PC-3 (cell line): ENCODE measurements at regions of chr13 and their contacts with region 1.

Region 1: DNA sequence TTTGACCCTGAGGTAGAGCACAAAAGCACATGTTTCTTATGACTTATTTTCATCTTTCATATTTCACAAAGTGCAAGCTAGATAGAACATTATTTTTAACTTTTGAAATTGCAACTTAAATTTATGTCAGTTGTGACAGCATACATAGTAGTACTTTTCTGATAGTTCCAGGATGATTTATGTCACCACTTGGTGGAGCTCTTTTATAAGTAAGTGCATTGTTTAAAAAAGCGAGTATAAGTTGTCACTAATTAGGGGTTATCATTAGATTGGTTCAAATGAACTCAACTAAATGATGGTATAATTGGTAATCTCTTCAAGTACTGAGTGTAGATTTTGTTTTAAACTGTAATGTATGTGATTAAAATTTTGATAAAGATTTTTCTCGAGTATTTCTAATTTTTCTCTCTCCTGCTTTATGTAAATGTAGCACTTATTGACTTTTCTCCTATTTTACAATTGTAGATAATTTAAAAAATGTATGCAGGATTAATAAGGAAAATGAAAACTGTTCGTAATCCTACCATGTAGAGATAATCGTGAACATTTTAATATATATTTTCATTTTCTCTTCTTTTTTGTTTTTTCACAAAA is 31.1 kb downstream of the RB1 start:
- DNase-seq: peak; percentile 49
- ATAC-seq: peak; percentile 74
- H3K4me3 ChIP-seq: no peak overlapping the region
- H3K27ac ChIP-seq: peak overlapping the region; percentile 53
- H3K4me1 ChIP-seq: peaks cover 18% of the 10 kb centered on the region
- H3K27me3 ChIP-seq: no peaks in the 10 kb centered on the region
- CTCF ChIP-seq: peak; percentile 87

Region 2: DNA sequence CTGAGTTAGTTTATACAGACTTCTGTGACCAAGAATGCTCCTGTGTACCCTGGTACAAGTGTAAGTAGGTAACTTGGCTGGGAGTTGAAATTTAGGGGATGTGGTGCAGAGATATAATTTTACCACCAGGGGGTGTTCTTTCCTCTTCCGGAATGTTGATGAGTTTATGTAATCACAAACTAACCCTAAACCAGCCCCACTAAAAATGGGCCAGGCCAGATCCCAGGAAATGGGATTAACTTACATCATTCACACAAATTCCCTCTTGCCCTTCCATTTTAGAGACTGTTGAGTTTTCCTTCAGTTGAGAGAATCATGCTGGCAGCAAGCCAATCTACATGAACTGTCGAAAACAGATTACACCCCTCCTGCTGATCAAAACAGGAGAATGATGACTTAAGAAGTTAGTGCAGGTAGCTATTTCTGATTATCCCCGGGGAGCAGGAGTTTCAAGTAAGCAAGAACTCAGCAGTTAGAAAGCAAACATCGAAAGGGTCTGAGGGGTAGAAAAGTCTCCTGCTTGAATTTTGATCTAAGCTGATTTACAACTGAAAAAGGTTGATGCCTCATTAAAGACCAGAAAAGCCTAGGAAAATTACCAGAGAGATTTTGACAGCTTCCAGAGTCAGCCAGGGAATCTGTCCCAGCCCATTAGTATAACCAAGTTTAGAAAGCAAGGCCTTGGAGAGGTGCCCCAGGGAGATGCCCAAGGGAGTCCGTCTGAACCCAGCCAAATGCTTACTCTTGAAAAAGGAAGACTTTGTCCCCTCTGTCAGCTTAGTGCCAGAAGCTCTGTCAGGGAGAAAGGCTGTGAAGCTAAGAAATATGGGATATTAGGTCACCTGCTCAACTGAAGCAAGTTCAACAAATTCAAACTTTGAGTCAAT is 207.4 kb before region 1 on chr13:
- CTCF ChIA-PET with region 1: no interaction called
- POLR2A ChIA-PET with region 1: no interaction called
- intact Hi-C with region 1: loop called (anchors 5 kb)
- DNase-seq: peak; percentile 66
- ATAC-seq: peak; percentile 73
- H3K4me3 ChIP-seq: no peak overlapping the region
- H3K27ac ChIP-seq: no peak overlapping the region
- H3K4me1 ChIP-seq: no peaks in the 10 kb centered on the region
- H3K27me3 ChIP-seq: no peaks in the 10 kb centered on the region
- CTCF ChIP-seq: peak; percentile 68

Region 3: DNA sequence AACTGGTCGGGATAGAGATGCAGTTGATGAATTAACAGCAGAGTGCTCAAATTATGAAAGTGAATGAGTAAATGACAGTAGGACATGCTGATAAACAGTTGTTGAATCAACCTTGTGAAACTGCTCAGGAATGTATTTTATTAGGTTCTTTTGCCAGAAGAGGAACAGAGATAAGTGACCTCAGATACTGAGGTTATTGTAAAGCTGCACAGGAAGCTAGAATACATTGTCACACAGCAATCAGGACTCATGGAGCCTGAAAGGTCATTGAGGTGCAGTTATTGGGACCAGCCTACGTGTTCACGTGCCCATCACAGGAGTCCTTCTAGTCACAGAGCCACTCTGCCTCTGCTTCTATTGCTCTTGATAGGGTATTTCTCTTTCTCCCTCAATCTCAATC is 192.2 kb before region 1 on chr13:
- CTCF ChIA-PET with region 1: no interaction called
- POLR2A ChIA-PET with region 1: no interaction called
- intact Hi-C with region 1: no loop called
- DNase-seq: no peak
- ATAC-seq: no peak
- H3K4me3 ChIP-seq: no peak overlapping the region
- H3K27ac ChIP-seq: no peak overlapping the region
- H3K4me1 ChIP-seq: no peaks in the 10 kb centered on the region
- H3K27me3 ChIP-seq: no peaks in the 10 kb centered on the region
- CTCF ChIP-seq: no peak

Region 4: DNA sequence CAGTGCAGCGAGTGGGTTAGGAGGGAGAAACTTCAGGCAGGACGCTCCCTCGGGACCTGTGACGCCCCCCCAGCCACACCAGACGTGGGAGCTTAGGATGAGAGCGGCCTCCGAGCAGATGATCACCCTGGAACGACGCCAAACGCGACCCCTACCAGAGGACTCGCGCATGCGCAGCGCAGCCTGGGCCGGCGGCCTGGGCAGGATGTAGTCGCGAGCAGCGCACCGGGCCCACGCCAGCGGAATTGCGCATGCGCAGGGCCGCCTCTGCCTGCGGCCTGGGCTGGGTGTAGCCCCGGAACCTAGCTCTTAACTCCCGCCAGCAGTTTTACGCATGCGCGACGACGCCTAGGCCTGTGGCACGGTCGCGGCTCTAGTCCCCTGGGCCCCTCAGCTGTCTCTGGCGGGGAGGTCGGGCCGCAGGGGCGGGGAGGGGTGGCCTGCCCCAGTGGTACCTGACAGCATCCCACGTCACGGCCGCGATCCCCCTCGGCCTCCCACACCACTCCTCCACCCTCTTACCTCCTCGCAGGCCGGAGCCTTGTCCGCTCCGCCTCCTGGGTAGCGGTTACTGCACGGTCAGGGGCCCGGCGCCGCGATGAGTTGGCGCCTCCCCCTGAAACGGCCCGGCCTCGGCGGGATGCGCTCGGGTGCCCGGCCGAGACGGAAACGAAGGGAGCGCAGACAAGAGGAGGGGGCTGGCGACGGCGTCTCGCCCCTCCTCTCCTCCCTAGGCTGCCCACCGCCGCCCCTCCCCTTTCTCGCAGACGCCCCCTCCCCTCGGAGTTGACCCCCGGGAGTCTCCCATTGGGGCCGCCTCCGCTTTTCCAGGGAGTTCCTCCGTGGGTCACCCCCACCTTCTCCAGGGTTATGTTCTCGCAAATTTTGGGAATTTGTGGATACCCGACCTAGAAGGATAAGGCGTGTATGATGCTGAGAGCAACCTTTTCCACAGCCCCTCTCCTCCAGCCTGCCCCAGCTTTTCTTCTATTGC is 198.2 kb after region 1 on chr13 and contains the start of gene RCBTB2:
- CTCF ChIA-PET with region 1: no interaction called
- POLR2A ChIA-PET with region 1: no interaction called
- intact Hi-C with region 1: loop called (anchors 1 kb)
- DNase-seq: peak; percentile 95
- ATAC-seq: peak; percentile 90
- H3K4me3 ChIP-seq: peak within 1 kb of the TSS; percentile 88
- H3K27ac ChIP-seq: peak within 1 kb of the TSS; percentile 54
- H3K4me1 ChIP-seq: peaks cover 7% of the 10 kb centered on the region; the same call in 1 of the 2 replicates
- H3K27me3 ChIP-seq: no peaks in the 10 kb centered on the region
- CTCF ChIP-seq: no peak
- total RNA-seq, gene RCBTB2: 2.1 and 2.5 TPM in 2 replicates